ENCODE measurements at regions of chr2 and their contacts with region 1.

Region 1: GRCh38 chr2:156541229-156541628 is 105.0 kb downstream of the GPD2 start:
- DNase-seq: no peak
- H3K4me3 ChIP-seq: no peak overlapping the region
- H3K27ac ChIP-seq: no peak overlapping the region
- H3K4me1 ChIP-seq: peaks cover 16% of the 10 kb centered on the region
- H3K27me3 ChIP-seq: no peaks in the 10 kb centered on the region
- CTCF ChIP-seq: no peak
- POLR2A ChIP-seq: no peak

Region 2: DNA sequence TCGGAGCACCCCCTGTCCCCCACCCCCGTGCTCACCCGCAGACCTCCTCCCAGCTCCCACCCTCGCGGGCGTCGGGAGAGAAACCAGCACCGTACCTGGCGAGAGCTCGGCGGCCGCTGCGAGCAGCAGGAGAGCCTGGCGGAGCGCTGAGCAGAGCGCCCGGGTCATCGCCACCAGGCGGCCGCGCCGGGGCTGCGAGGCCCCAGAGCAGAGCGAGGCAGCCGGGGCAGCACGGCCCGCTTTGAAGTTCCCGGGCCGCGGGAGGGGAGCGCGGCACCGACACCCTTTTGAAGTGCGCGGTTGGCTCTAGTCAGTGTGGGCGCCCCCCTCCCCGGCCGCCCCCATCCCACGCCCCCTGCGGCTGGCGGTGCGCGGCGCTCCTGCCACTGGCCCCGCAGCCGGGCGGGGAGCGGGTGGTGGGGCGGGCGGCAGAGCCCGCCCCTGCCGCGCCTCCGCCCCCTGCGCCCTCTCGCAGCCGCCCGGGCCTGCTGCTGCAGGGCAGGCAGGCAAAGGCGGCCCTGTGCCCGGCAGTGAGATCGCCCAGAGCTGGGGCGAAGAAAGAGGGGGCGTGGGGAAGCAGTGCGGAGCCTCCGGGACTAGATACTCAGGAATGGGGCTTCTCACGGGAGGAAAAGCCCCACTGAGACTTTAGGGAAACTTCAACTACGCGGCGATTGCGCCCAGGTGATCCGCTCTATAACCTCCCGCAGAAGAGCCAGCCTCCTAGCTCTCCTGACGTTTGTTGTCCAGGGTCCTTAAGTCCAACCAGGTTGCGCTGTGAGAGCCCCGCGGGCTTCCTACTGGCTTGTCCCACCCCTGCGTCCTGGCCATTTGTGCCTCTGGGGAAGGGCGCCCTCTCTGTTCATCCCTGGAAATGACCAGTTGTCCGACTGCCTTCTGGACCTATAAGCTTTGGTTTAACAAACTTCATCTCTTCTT is 1087.5 kb after region 1 on chr2 and contains the start of gene ACVR1C:
- intact Hi-C with region 1: loop called (anchors 5 kb)
- DNase-seq: no peak
- H3K4me3 ChIP-seq: peak within 1 kb of the TSS; percentile 48 to 76
- H3K27ac ChIP-seq: no peak within 1 kb of the TSS
- H3K4me1 ChIP-seq: peaks cover 17% of the 10 kb centered on the region
- H3K27me3 ChIP-seq: no peaks in the 10 kb centered on the region
- CTCF ChIP-seq: peak in 1 of 3 experiments; percentile 18
- POLR2A ChIP-seq: no peak
- total RNA-seq, gene ACVR1C: 6.6 TPM

Region 3: DNA sequence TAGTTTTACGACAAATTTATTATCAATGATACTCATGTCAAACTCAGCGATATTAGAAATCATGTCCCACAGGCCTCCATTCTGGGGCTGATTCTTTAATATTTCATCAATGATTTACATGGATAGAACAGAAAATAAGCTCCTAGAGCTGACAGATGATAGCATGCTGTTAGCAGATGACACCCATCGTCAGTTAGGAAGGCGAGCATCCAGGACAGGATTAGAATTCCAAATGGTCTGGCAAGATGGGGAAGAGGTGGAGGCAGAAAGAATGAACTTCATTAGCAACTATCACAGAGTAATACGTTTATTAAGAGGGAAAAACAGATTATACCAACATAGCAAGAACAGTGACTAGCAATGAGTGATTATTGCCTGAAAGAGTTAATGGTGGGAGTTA is 1381.1 kb after region 1 on chr2:
- intact Hi-C with region 1: no loop called
- DNase-seq: no peak
- H3K4me3 ChIP-seq: no peak overlapping the region
- H3K27ac ChIP-seq: no peak overlapping the region
- H3K4me1 ChIP-seq: no peaks in the 10 kb centered on the region
- H3K27me3 ChIP-seq: no peaks in the 10 kb centered on the region
- CTCF ChIP-seq: no peak
- POLR2A ChIP-seq: no peak

Measured in vagina (tissue), 2 donors.